CD8-positive, alpha-beta T cell (primary cell): ENCODE measurements at regions of chr6 and their contacts with region 1.

Region 1: GRCh38 chr6:36027501-36028087 is at the start of gene MAPK14:
- DNase-seq: peak; percentile 94 to 100 (median 98)
- ATAC-seq: peak; percentile 88
- H3K4me3 ChIP-seq: peak within 1 kb of the TSS; percentile 85 to 99
- H3K4me3 Mint-ChIP-seq: peak within 1 kb of the TSS; percentile 90
- H3K27ac ChIP-seq: peak within 1 kb of the TSS; percentile 72 to 73
- H3K27ac Mint-ChIP-seq: peak within 1 kb of the TSS; percentile 95
- H3K4me1 ChIP-seq: peaks cover 14% of the 10 kb centered on the region
- H3K4me1 Mint-ChIP-seq: peaks cover 42% of the 10 kb centered on the region
- H3K27me3 ChIP-seq: peaks cover 0 to 2% of the 10 kb centered on the region in 2 experiments
- H3K27me3 Mint-ChIP-seq: peaks cover 18% of the 10 kb centered on the region
- CTCF ChIP-seq: peak; percentile 87
- total RNA-seq, gene MAPK14: 34.5 to 34.9 TPM

Region 2: GRCh38 chr6:34447910-34448309 is 1579.7 kb before region 1 on chr6:
- CTCF ChIA-PET with region 1: no interaction called
- POLR2A ChIA-PET with region 1: no interaction called
- intact Hi-C with region 1: no loop called
- DNase-seq: no peak
- ATAC-seq: no peak
- H3K4me3 ChIP-seq: no peak overlapping the region
- H3K4me3 Mint-ChIP-seq: no peak overlapping the region
- H3K27ac ChIP-seq: no peak overlapping the region
- H3K27ac Mint-ChIP-seq: no peak overlapping the region
- H3K4me1 ChIP-seq: no peaks in the 10 kb centered on the region
- H3K4me1 Mint-ChIP-seq: no peaks in the 10 kb centered on the region
- H3K27me3 ChIP-seq: no peaks in the 10 kb centered on the region
- H3K27me3 Mint-ChIP-seq: no peaks in the 10 kb centered on the region
- CTCF ChIP-seq: no peak

Region 3: GRCh38 chr6:35057449-35058357 is 969.9 kb before region 1 on chr6:
- CTCF ChIA-PET with region 1: no interaction called
- POLR2A ChIA-PET with region 1: no interaction called
- intact Hi-C with region 1: no loop called
- DNase-seq: no peak
- ATAC-seq: no peak
- H3K4me3 ChIP-seq: no peak overlapping the region
- H3K4me3 Mint-ChIP-seq: no peak overlapping the region
- H3K27ac ChIP-seq: no peak overlapping the region
- H3K27ac Mint-ChIP-seq: no peak overlapping the region
- H3K4me1 ChIP-seq: peaks cover 14% of the 10 kb centered on the region
- H3K4me1 Mint-ChIP-seq: peaks cover 14% of the 10 kb centered on the region
- H3K27me3 ChIP-seq: no peaks in the 10 kb centered on the region
- H3K27me3 Mint-ChIP-seq: no peaks in the 10 kb centered on the region
- CTCF ChIP-seq: no peak

Region 4: GRCh38 chr6:35920793-35921732 is 106.5 kb before region 1 on chr6 and contains the start of gene SRPK1:
- CTCF ChIA-PET with region 1: no interaction called
- POLR2A ChIA-PET with region 1: no interaction called
- intact Hi-C with region 1: loop called (anchors 2 kb)
- DNase-seq: peak; percentile 66 to 90 (median 81)
- ATAC-seq: peak; percentile 76
- H3K4me3 ChIP-seq: peak within 1 kb of the TSS; percentile 63 to 67
- H3K4me3 Mint-ChIP-seq: peak within 1 kb of the TSS; percentile 96
- H3K27ac ChIP-seq: peak within 1 kb of the TSS; percentile 42 to 62
- H3K27ac Mint-ChIP-seq: peak within 1 kb of the TSS; percentile 93
- H3K4me1 ChIP-seq: peaks cover 19% of the 10 kb centered on the region
- H3K4me1 Mint-ChIP-seq: peaks cover 41% of the 10 kb centered on the region
- H3K27me3 ChIP-seq: no peaks in the 10 kb centered on the region
- H3K27me3 Mint-ChIP-seq: no peaks in the 10 kb centered on the region
- CTCF ChIP-seq: no peak
- total RNA-seq, gene SRPK1: 21.0 to 22.7 TPM

Region 5: GRCh38 chr6:35984701-35985100 is 42.9 kb before region 1 on chr6:
- CTCF ChIA-PET with region 1: no interaction called
- POLR2A ChIA-PET with region 1: no interaction called
- intact Hi-C with region 1: no loop called
- DNase-seq: no peak
- ATAC-seq: no peak
- H3K4me3 ChIP-seq: no peak overlapping the region
- H3K4me3 Mint-ChIP-seq: no peak overlapping the region
- H3K27ac ChIP-seq: no peak overlapping the region
- H3K27ac Mint-ChIP-seq: no peak overlapping the region
- H3K4me1 ChIP-seq: no peaks in the 10 kb centered on the region
- H3K4me1 Mint-ChIP-seq: no peaks in the 10 kb centered on the region
- H3K27me3 ChIP-seq: no peaks in the 10 kb centered on the region
- H3K27me3 Mint-ChIP-seq: peaks cover 6% of the 10 kb centered on the region
- CTCF ChIP-seq: no peak

Region 6: GRCh38 chr6:36094753-36095496 is 67.3 kb after region 1 on chr6:
- CTCF ChIA-PET with region 1: interaction called, 196 read pairs
- POLR2A ChIA-PET with region 1: interaction called, 39 read pairs
- intact Hi-C with region 1: loop called (anchors 1 kb)
- DNase-seq: peak; percentile 59 to 89 (median 82)
- ATAC-seq: peak; percentile 71
- H3K4me3 ChIP-seq: no peak overlapping the region
- H3K4me3 Mint-ChIP-seq: no peak overlapping the region
- H3K27ac ChIP-seq: peak overlapping the region in 1 of 2 experiments; percentile 42
- H3K27ac Mint-ChIP-seq: peak overlapping the region; percentile 67
- H3K4me1 ChIP-seq: peaks cover 27% of the 10 kb centered on the region
- H3K4me1 Mint-ChIP-seq: peaks cover 33% of the 10 kb centered on the region
- H3K27me3 ChIP-seq: no peaks in the 10 kb centered on the region
- H3K27me3 Mint-ChIP-seq: no peaks in the 10 kb centered on the region
- CTCF ChIP-seq: peak; percentile 98

Region 7: DNA sequence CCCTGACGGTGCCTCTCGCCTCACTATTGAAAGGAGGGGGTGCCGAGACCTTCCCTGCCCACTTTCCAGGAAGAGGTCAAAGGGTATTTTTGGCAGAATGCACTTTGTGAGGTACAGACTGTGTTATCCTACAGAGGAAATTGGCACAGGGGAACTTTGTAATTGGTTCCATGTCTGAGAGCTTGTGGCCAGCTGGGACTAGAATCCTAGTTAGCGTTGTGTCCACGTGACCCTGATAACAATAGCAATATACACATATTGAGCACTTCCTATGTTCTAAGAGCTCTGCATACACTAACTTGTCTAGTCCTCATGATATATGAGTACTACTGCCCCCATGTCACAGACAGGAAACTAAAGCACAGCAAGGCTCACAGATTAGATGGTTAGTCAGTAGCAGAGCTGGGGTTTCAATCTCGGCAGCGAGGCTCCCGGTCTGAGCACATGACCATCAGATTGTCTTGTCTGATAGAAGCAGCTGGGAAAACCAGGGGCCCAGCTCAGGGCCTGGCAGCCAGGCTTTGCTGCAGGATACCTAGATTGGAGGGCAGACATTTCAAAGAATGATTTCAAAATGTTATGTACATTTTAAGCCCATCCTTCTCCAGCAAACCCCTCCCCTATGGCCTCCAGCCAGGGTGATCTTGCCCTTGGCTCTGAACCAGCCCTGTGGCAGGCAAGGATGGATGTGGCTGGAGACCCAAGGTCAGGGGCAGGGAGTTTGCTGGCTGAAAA is 104.1 kb after region 1 on chr6:
- CTCF ChIA-PET with region 1: interaction called, 9 read pairs
- POLR2A ChIA-PET with region 1: interaction called, 27 read pairs
- intact Hi-C with region 1: loop called in 1 of 2 experiments (anchors 1 kb)
- DNase-seq: peak in 8 of 9 experiments; percentile 22 to 78 (median 48)
- ATAC-seq: peak; percentile 71
- H3K4me3 ChIP-seq: peak overlapping the region; percentile 79 to 89
- H3K4me3 Mint-ChIP-seq: peak overlapping the region; percentile 88
- H3K27ac ChIP-seq: peak overlapping the region; percentile 81 to 92
- H3K27ac Mint-ChIP-seq: peak overlapping the region; percentile 95
- H3K4me1 ChIP-seq: peaks cover 48% of the 10 kb centered on the region
- H3K4me1 Mint-ChIP-seq: peaks cover 54% of the 10 kb centered on the region
- H3K27me3 ChIP-seq: no peaks in the 10 kb centered on the region
- H3K27me3 Mint-ChIP-seq: no peaks in the 10 kb centered on the region
- CTCF ChIP-seq: no peak

Region 8: GRCh38 chr6:36302227-36302976 is 274.8 kb after region 1 on chr6:
- CTCF ChIA-PET with region 1: interaction called, 4 read pairs
- POLR2A ChIA-PET with region 1: interaction called, 3 read pairs
- intact Hi-C with region 1: loop called (anchors 1 kb)
- DNase-seq: peak; percentile 84 to 97 (median 93)
- ATAC-seq: peak; percentile 99
- H3K4me3 ChIP-seq: no peak overlapping the region
- H3K4me3 Mint-ChIP-seq: no peak overlapping the region
- H3K27ac ChIP-seq: no peak overlapping the region
- H3K27ac Mint-ChIP-seq: no peak overlapping the region
- H3K4me1 ChIP-seq: no peaks in the 10 kb centered on the region
- H3K4me1 Mint-ChIP-seq: peaks cover 6% of the 10 kb centered on the region
- H3K27me3 ChIP-seq: peaks cover 0 to 2% of the 10 kb centered on the region in 2 experiments
- H3K27me3 Mint-ChIP-seq: peaks cover 14% of the 10 kb centered on the region
- CTCF ChIP-seq: peak; percentile 99

Region 9: DNA sequence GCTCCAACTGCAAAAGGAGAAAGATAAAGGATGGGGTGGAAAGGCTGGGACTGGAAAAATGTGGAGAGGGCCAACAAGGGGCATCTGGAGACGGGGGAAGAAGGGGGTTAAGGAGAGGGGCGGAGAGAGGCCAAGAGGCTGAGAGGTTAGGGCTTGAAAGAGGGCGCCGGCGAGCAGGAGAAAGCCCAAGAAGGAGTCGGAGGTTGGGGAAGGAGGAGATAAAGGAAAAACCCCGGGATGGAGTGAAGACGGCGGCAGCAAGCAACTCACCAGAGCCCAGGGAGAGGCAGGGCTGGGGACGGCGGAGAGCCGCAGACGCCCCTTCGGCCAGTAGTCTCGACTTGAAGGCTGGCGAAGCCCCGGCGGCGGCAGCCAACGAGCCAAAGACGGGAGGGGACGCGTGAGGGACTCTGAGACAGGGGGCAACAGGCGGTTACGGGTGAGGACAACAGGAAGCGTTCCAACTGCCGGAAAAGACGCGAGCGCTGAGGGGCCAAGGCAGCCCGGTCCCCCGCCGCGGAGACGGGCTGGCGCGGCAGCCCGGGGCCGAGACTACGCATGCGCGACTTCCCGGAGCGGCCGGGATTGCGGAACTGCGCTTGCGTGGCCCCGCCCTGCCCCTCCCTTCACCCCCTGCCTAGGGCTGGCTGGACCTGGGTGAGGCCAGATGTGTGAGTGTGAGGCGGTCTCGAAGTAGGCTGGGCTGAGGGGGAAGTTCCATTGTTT is 519.5 kb after region 1 on chr6 and contains the start of gene STK38:
- CTCF ChIA-PET with region 1: no interaction called
- POLR2A ChIA-PET with region 1: no interaction called
- intact Hi-C with region 1: no loop called
- DNase-seq: peak; percentile 85 to 98 (median 94)
- ATAC-seq: peak; percentile 72
- H3K4me3 ChIP-seq: peak within 1 kb of the TSS; percentile 82 to 85
- H3K4me3 Mint-ChIP-seq: peak within 1 kb of the TSS; percentile 99
- H3K27ac ChIP-seq: peak within 1 kb of the TSS; percentile 92 to 94
- H3K27ac Mint-ChIP-seq: peak within 1 kb of the TSS; percentile 99
- H3K4me1 ChIP-seq: peaks cover 32% of the 10 kb centered on the region
- H3K4me1 Mint-ChIP-seq: peaks cover 52% of the 10 kb centered on the region
- H3K27me3 ChIP-seq: no peaks in the 10 kb centered on the region
- H3K27me3 Mint-ChIP-seq: no peaks in the 10 kb centered on the region
- CTCF ChIP-seq: no peak
- total RNA-seq, gene STK38: 37.6 to 38.7 TPM

Region 10: DNA sequence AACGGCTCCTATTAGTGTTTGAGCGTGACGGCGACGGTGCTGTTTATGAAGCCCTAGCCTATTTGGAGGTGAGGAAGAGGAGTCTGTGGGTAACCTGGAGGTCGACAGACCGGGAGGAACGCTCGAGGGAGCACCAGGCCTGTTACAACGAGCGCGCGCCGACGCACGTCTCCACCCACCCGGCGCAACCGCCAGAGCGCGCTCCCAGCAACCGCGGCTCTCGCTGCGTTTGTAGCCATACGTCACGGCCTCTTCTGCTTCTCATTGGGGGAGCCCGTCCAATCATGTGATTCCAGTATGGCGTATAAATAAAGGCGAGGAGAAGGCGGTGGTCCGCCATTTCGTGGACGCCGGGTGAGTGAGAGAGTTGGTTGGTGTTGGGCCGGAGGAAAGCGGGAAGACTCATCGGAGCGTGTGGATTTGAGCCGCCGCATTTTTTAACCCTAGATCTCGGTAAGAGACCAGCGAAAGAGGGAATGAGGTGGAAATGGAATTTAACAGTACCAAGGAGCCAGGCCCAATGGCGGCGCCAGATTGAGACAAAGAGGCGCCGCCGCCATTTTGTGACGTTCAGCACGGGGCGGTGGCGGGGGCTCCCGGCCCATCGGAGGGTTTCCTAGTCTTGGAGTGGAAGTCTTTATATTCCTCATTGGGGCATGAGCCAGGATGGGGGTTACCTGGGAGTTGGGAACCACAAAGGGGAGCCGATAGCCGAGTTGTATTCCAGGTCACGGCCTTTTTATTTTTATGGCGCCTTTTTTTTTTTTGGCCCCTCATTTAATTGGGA is 566.6 kb after region 1 on chr6 and contains the start of gene SRSF3:
- CTCF ChIA-PET with region 1: no interaction called
- POLR2A ChIA-PET with region 1: no interaction called
- intact Hi-C with region 1: loop called in 1 of 2 experiments (anchors 5 kb)
- DNase-seq: peak; percentile 90 to 99 (median 94)
- ATAC-seq: peak; percentile 86
- H3K4me3 ChIP-seq: peak within 1 kb of the TSS; percentile 72 to 74
- H3K4me3 Mint-ChIP-seq: peak within 1 kb of the TSS; percentile 97
- H3K27ac ChIP-seq: peak within 1 kb of the TSS; percentile 93 to 95
- H3K27ac Mint-ChIP-seq: peak within 1 kb of the TSS; percentile 99
- H3K4me1 ChIP-seq: peaks cover 42% of the 10 kb centered on the region
- H3K4me1 Mint-ChIP-seq: peaks cover 45% of the 10 kb centered on the region
- H3K27me3 ChIP-seq: no peaks in the 10 kb centered on the region
- H3K27me3 Mint-ChIP-seq: no peaks in the 10 kb centered on the region
- CTCF ChIP-seq: no peak
- total RNA-seq, gene SRSF3: 620 to 627 TPM